ENCODE measurements at regions of chr12 and their contacts with region 1.

Region 1: DNA sequence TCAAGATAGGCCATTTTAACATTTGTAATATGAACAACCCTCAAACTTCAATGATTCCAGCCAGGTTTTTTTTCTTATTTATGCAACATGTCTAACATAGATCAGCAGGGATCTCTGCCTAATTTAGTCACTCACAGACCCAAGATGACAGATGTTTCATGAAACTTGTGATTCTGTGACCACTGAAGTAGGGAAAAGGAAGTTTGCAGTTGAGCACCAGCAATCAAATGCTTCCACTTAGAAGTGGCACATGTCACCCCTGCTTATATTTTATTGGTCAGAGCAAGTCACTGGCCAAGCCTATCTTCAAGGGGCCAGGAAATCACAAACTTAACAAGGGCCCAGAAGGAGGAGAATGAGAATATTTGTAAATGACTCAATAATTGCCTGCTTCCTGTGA is 150.6 kb downstream of the BCAT1 start:
- DNase-seq: no peak
- ATAC-seq: no peak
- H3K4me3 ChIP-seq: no peak overlapping the region
- H3K4me3 Mint-ChIP-seq: no peak overlapping the region
- H3K27ac ChIP-seq: no peak overlapping the region
- H3K27ac Mint-ChIP-seq: no peak overlapping the region
- H3K4me1 ChIP-seq: peaks cover 0 to 8% of the 10 kb centered on the region in 2 donors
- H3K4me1 Mint-ChIP-seq: peaks cover 2 to 39% (median 22%) of the 10 kb centered on the region in 7 donors
- H3K27me3 ChIP-seq: no peaks in the 10 kb centered on the region
- H3K27me3 Mint-ChIP-seq: peaks cover 0 to 3% (median 0%) of the 10 kb centered on the region in 5 donors

Region 2: DNA sequence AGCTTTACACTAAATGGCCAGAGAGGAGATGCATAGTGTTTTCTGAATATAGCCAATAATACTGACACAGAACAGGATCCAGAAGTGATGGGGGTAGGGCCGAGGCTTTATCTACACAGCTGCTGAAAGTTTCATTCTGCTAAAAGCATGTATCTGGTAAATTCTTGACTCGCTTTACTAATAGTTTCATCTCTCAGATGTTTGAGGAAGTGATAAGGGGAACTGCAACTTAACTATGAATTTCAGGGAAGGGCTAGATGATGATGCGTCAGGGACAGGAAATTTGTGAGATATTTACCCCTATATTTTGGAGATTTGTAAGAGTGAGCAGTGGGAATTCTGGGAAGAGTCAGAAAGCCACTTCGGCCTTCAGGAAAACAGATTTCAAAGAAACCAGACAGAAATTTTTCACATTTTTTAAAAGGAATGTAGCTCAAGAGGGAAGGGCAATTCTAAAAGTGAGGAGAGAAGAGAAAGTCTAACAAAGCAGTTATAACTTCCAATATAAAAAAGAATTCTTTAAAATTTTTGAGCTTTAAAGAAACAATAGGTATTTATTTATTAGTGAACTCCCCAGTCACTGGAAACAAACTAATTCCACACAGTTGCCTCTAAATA is 92.5 kb before region 1 on chr12:
- CTCF ChIA-PET with region 1: no interaction called
- POLR2A ChIA-PET with region 1: no interaction called
- intact Hi-C with region 1: no loop called
- DNase-seq: no peak
- ATAC-seq: peak; percentile 64
- H3K4me3 ChIP-seq: no peak overlapping the region
- H3K4me3 Mint-ChIP-seq: no peak overlapping the region
- H3K27ac ChIP-seq: no peak overlapping the region
- H3K27ac Mint-ChIP-seq: no peak overlapping the region
- H3K4me1 ChIP-seq: no peaks in the 10 kb centered on the region
- H3K4me1 Mint-ChIP-seq: peaks cover 0 to 7% (median 0%) of the 10 kb centered on the region in 7 donors
- H3K27me3 ChIP-seq: no peaks in the 10 kb centered on the region
- H3K27me3 Mint-ChIP-seq: peaks cover 0 to 4% (median 0%) of the 10 kb centered on the region in 5 donors

Region 3: DNA sequence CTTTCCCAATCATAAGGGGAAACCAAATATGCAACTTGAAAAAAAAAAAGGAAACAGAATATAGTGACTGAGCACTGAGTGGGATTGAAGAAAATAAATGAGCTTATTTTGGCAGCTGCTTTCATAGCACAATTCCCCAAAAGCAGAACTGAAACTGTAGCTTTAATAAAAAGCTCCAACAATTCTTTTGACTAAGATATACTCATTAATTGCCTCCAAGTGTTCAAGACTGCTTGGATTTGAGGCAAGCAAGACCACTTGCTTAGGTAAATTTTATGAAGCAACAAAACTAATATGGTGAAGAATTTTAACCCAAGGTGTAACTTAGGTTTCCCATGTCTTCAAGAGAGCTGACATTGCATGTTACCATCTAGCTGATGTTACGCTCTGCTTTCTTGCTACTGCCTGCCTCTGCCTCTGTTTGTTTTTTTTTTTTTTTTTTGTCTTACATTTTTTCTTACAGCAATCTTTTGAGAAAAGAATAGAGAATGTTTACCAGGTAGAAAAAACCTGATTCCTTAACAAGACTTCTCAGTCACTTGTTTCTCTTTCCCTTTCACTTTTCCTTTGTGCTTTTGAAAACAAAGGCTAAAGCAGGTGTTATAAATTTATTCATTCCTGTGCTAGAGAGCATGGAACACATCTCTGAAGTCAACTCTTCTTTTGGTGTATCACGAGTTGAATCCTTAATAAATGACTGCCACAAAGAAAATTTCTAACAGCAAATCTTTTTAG is 16.2 kb after region 1 on chr12:
- CTCF ChIA-PET with region 1: no interaction called
- POLR2A ChIA-PET with region 1: no interaction called
- intact Hi-C with region 1: loop called (anchors 2 kb)
- DNase-seq: peak in 1 of 9 donors; percentile 19
- ATAC-seq: peak; percentile 59
- H3K4me3 ChIP-seq: peak overlapping the region; percentile 22
- H3K4me3 Mint-ChIP-seq: peak overlapping the region; percentile 51 to 90 (median 84)
- H3K27ac ChIP-seq: peak overlapping the region; percentile 0
- H3K27ac Mint-ChIP-seq: peak overlapping the region; percentile 70 to 95 (median 87)
- H3K4me1 ChIP-seq: no peaks in the 10 kb centered on the region
- H3K4me1 Mint-ChIP-seq: peaks cover 0 to 28% (median 27%) of the 10 kb centered on the region in 7 donors
- H3K27me3 ChIP-seq: no peaks in the 10 kb centered on the region
- H3K27me3 Mint-ChIP-seq: no peaks in the 10 kb centered on the region

Measured in naive thymus-derived CD4-positive, alpha-beta T cell (primary cell).